ENCODE measurements at regions of chr18 and their contacts with region 1.

Region 1: DNA sequence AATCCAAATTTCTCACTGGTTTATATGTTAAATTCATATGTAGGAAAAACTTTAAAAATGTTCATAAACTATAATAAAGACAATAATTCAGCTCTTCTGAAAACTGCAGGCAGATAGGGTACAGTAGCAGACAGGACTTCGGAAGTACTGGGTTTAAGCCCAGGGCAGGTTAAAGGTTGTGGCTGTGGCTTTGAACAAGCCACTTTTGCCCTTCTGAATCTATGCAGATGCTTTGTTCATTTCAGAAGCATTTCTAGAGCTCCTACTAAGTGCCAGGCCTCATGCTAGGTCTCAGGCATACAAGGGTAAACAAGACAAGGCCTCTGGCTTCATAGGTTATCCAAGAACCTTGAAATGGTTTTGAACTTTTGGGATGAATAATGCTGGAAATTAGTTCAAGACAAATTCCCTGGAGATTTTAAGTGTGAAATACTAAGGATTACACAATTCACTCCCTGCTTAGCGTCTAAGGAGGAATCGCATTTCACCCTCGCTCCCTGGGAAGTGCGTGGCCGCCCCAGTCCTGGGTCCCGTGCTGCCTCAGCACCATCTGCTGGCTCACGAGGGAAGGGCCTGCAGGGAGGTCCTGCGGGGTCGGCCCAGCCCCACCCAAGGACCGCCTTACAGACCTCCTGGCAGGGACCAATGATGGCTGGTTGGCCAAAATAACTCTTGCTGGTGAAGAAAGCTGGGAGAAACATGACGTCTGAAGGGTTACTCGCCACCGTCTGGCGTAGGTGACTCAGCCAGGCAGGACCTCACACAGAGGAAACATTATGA is 67.7 kb upstream of the L3MBTL4 start:
- DNase-seq: peak; percentile 3
- H3K4me3 ChIP-seq: no peak overlapping the region
- H3K27ac ChIP-seq: no peak overlapping the region
- H3K4me1 ChIP-seq: no peaks in the 10 kb centered on the region
- H3K27me3 ChIP-seq: no peaks in the 10 kb centered on the region
- CTCF ChIP-seq: 0 out of 2 replicates have a peak, but pooled peaks have one; percentile 16

Region 2: DNA sequence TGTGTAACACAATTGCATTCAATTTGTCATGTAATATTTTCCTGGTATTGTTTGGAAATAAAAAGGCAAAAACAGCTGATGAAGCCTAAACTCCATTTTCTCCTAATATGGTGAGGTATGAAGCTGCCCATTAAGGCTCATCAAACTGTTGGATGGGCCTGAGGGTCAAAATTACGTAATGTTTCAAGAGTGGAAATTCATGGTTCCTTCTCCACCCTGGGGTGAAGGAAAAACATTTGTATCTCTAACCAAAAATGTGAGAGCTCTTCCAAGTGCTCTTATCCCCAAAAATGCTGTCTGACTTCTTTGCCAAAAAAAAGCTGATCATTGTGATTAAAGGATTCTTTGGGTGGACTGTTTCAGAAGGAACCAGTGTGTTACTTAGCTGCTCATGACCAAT is 339.0 kb after region 1 on chr18:
- CTCF ChIA-PET with region 1: no interaction called
- POLR2A ChIA-PET with region 1: no interaction called
- intact Hi-C with region 1: loop called (anchors 5 kb)
- DNase-seq: no peak
- H3K4me3 ChIP-seq: no peak overlapping the region
- H3K27ac ChIP-seq: no peak overlapping the region
- H3K4me1 ChIP-seq: no peaks in the 10 kb centered on the region
- H3K27me3 ChIP-seq: no peaks in the 10 kb centered on the region
- CTCF ChIP-seq: no peak

Measured in A673 (cell line).